ENCODE measurements at regions of chr17 and their contacts with region 1.

Region 1: DNA sequence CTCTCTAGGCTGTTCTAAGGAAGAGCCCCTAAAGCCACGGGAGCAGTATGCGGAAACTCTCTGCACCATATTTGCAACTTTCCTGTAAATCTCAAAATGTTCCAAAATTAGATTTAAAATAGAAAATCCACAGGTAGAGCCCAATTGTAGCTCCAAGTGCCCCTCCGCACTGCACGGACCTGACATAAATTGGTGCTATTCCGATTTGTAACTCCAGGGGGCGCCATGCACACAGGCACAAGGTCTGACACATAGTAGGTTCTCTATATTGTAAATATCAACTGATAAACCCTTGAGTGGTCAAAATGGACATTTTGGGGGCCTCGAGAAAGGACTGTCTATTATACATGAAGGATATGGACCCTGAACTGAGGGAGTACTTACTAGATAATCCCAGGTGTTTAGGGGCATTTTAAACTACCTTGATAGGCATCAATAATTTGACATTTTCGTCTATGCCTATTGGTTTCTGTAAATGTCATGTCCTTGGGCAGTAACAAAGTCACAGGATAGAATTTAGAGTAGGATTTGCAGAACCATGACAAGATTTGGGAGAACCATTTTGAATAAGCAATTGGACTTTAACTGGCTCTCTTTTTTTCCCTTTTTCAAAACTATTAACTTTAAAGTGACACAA is 36.6 kb upstream of the TMEM132E start:
- DNase-seq: peak in 1 of 2 experiments; percentile 89
- H3K4me3 ChIP-seq: no peak overlapping the region
- H3K27ac ChIP-seq: no peak overlapping the region
- H3K4me1 ChIP-seq: peaks cover 0 to 4% (median 3%) of the 10 kb centered on the region in 4 experiments; a peak in 2 of 7 replicates
- H3K27me3 ChIP-seq: peaks cover 0 to 5% (median 2%) of the 10 kb centered on the region in 4 experiments; a peak in 1 of 7 replicates
- CTCF ChIP-seq: peak; percentile 63 to 85 (median 80)
- EP300 ChIP-seq: no peak
- POLR2A ChIP-seq: no peak
- RAD21 ChIP-seq: peak; percentile 91 to 93

Region 2: GRCh38 chr17:34519282-34519681 is 23.5 kb before region 1 on chr17:
- CTCF ChIA-PET with region 1: interaction called, 46 read pairs
- POLR2A ChIA-PET with region 1: no interaction called
- DNase-seq: peak; percentile 25 to 85
- H3K4me3 ChIP-seq: no peak overlapping the region
- H3K27ac ChIP-seq: no peak overlapping the region
- H3K4me1 ChIP-seq: 0 out of 7 replicates have a peak, but pooled peaks cover 0 to 4% (median 0%) of the 10 kb centered on the region in 4 experiments
- H3K27me3 ChIP-seq: no peaks in the 10 kb centered on the region; a peak in 1 of 7 replicates
- CTCF ChIP-seq: peak; percentile 83 to 94 (median 92)
- EP300 ChIP-seq: no peak
- POLR2A ChIP-seq: no peak
- RAD21 ChIP-seq: peak; percentile 86 to 94

Region 3: DNA sequence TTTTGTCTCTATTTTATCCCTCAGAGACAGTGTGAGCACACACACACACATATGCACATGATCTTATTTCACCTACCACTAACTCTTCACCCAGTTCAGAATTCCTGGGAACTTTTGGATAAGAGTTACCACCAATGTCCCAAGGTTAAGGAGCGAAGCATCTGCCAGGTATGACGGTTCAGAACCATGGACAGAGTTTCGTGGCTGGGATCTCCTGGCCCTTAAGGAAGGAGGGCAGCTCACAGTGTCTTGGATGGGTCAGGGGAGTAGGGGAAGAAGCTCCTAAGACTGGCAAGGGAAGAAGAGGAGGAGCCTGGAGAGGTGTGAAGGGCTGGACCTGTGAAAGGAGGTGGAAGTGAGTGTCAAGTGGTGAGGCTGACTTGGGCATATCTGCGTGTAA is 13.6 kb after region 1 on chr17:
- CTCF ChIA-PET with region 1: interaction called, 102 read pairs
- POLR2A ChIA-PET with region 1: no interaction called
- DNase-seq: peak in 1 of 2 experiments; percentile 72
- H3K4me3 ChIP-seq: no peak overlapping the region
- H3K27ac ChIP-seq: no peak overlapping the region
- H3K4me1 ChIP-seq: peaks cover 0 to 2% (median 0%) of the 10 kb centered on the region in 4 experiments; a peak in 1 of 7 replicates
- H3K27me3 ChIP-seq: peaks cover 0 to 2% (median 0%) of the 10 kb centered on the region in 4 experiments; a peak in 2 of 7 replicates
- CTCF ChIP-seq: no peak
- EP300 ChIP-seq: no peak
- POLR2A ChIP-seq: no peak
- RAD21 ChIP-seq: 0 out of 4 replicates have a peak, but pooled peaks have one; percentile 5 to 9

Region 4: GRCh38 chr17:34567691-34568465 is 25.1 kb after region 1 on chr17:
- CTCF ChIA-PET with region 1: interaction called, 20 read pairs
- POLR2A ChIA-PET with region 1: no interaction called
- DNase-seq: no peak
- H3K4me3 ChIP-seq: no peak overlapping the region
- H3K27ac ChIP-seq: no peak overlapping the region
- H3K4me1 ChIP-seq: peaks cover 0 to 11% (median 4%) of the 10 kb centered on the region in 4 experiments; a peak in 4 of 7 replicates
- H3K27me3 ChIP-seq: peaks cover 0 to 16% (median 4%) of the 10 kb centered on the region in 4 experiments; a peak in 4 of 7 replicates
- CTCF ChIP-seq: no peak
- EP300 ChIP-seq: no peak
- POLR2A ChIP-seq: no peak
- RAD21 ChIP-seq: no peak

Region 5: DNA sequence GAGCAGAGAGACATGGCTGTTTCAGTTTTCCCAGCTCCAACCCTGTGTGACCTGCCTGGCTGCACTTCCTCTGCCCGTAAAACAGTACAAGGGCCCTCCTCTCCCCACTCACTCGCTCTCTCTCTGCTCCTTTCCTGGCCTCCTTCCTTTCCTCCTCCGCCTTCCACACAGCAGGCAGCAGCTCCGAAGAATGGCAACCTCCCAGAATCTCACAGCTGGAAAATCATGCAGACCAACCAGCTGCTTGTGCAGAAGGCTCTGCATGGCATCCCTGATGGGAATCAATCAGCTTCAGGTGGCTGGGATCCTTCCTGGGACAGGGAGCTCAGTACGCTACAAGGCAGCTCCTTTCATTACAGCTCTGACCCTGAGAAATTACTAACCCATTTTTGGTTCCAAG is 63.9 kb after region 1 on chr17:
- CTCF ChIA-PET with region 1: interaction called, 10 read pairs
- POLR2A ChIA-PET with region 1: no interaction called
- DNase-seq: no peak
- H3K4me3 ChIP-seq: no peak overlapping the region
- H3K27ac ChIP-seq: no peak overlapping the region; the same call in 1 of the 2 replicates
- H3K4me1 ChIP-seq: peaks cover 17 to 23% (median 20%) of the 10 kb centered on the region in 4 experiments
- H3K27me3 ChIP-seq: no peaks in the 10 kb centered on the region; a peak in 2 of 7 replicates
- CTCF ChIP-seq: no peak
- EP300 ChIP-seq: no peak
- POLR2A ChIP-seq: no peak
- RAD21 ChIP-seq: no peak

Measured in H1 (cell line).